ENCODE measurements at regions of chr11 and their contacts with region 1.

Region 1: DNA sequence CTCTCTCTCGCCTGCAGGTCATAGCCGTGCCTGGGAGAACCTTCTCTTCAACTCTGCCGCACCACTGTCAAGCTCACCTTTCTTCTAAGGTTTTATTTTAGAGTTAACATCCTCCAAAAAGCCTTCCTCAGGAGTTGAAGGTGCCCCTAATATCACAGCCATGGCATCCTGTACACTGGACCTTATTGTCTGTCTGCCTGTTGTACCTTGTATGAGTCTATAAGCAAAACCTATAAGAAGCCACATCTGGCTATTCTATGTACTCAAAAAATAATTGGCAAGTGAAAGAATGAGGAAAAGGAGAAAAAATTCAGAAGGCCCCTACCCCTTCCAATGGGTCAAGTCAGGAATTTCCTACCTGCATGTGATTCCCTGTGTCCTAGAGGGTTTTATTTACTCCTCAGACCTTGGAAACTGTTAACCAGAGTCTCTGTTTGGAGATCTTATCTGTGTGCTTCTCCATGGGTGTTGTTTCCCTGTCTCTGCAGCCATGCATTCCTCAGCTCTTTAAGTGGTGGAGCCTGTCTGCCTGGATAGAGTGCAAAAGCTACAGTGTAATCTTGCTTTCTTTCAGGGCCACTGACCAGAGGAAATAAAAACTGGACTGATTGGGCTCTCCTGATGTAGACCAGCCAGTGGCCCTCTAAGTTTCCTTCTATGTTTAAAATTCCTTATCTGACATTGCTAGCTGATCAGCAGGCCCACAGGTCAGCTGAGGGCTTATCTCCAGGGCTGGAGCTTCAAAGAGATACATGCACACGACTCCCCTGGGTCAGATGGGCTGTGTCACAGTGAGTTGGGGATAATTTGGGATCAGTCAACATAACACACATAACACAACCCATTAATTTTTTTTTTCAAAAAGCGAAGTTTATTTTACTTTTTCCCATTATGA is 37.6 kb upstream of the TMEM135 start:
- DNase-seq: no peak
- H3K4me3 ChIP-seq: no peak overlapping the region
- CTCF ChIP-seq: no peak
- POLR2A ChIP-seq: no peak

Region 2: DNA sequence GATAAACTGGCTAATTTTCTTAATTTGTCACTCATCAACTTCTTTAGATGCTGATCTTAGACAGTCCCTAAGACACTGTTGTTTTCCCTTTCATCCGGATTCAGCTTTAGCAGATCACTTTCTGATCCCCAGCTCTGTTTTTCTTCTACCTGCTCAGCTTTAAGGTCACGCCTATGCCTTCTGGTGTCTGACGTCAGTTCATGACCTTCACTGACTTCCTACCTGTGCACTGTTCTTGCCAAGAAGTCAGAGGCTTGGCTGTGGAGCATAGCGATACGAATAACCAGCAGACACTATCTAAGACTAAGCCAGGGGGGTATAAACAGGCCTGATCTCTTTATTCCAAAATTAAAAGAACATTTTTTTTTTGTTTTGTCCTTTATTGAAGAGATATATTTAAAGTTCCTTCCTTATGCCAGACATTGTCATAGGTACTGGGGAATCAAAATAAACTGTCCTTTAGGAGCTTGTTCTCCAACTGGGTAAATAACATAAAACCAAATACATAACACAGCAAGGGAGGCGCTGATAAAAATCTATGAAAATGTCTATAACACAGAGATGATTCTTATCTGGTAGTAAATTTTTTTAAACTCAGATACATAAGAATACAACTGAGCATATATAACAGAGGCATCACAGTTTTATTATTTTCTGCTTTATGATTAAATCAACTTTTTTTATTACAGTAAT is 1689.6 kb after region 1 on chr11:
- intact Hi-C with region 1: loop called (anchors 5 kb)
- DNase-seq: no peak
- H3K4me3 ChIP-seq: no peak overlapping the region
- CTCF ChIP-seq: no peak
- POLR2A ChIP-seq: no peak